AG04450 (cell line): ENCODE measurements at regions of chr12 and their contacts with region 1.

Region 1: DNA sequence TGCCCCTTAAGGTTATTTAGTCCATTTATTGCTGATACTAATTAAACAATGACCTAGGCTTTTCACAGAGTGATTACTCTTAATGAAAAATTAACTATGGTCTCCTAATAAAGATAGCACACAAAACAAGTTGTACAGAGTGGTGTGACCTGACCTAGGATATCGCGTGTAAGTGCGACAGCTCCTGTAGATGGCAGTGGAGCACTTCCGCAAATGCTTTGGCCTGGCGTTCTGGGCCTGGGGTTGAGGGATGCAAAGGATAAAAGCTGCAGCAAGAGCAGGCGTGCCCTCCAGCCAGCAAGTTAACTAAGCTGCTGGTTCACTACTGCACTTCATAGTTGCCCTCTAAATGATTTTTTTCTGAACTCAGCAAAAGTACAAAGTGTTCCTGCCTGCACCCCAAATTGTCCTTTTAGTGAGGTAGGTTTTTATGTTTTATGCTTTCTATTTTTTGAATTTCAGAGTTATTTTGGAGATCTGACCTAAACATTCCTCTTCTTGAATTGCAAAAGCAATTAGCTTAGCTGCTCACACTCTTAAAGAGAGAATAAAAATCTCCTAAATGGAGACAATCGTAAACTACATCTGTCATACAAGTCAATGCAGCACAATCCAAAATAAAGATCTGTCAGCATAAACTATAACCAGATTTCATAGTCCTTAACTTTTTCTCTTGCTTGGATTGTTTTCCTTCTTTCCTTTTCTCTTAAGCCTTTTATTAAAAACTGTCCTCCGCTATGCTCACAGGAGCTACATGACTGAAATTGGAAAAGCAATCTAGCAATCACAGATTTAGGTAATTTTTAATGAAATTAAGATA is 379.6 kb downstream of the LRIG3 start:
- DNase-seq: peak; percentile 85
- H3K4me3 ChIP-seq: no peak overlapping the region
- H3K27ac ChIP-seq: no peak overlapping the region
- H3K27me3 ChIP-seq: no peaks in the 10 kb centered on the region
- CTCF ChIP-seq: peak; percentile 94

Region 2: DNA sequence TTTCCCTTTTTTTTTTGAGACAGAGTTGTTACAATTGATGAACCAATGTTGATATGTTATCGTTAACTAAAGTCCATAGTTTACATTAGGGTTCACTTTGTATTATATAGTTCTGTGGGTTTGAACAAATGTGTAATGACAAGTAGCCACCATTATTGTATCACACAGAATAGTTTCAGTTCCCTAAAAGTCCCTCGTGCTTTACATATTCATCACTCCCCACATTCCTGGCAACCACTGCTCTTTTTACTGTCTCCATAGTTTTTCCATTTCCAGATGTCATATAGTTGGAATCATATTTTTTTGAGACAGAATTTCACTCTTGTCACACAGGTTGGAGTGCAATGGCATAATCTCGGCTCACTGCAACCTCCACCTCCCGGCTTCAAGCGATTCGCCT is 1765.1 kb before region 1 on chr12:
- CTCF ChIA-PET with region 1: no interaction called
- POLR2A ChIA-PET with region 1: no interaction called
- DNase-seq: no peak
- H3K4me3 ChIP-seq: no peak overlapping the region
- H3K27ac ChIP-seq: no peak overlapping the region
- H3K27me3 ChIP-seq: no peaks in the 10 kb centered on the region
- CTCF ChIP-seq: no peak

Region 3: DNA sequence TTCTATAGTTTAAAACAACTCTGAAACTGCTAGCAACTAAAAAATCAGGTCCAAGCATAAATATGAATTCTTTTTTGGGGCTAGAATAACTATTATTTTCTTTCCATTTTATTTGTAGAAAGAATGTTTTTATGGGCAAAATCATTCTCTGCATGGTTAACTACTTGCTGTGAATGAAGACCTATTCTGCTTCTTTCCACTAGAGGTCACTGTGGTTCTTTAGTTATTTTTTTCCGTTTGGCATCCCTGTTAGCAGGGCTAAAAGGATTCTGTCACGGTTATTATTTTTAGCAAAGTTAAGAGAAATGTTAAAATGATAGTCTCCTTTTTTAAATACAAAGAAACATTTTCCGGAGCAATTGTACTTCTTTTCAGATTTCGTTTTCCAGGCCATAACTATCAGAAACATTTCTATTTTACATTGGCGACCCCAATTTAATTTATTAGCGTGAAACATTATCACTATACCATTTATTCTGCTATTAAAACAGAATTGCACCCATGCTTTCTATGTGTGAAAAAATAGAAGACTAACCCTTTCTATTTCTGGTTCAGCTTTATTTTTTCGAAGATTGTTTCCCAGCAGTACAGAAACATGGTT is 194.6 kb before region 1 on chr12:
- CTCF ChIA-PET with region 1: interaction called, 21 read pairs
- POLR2A ChIA-PET with region 1: no interaction called
- DNase-seq: no peak
- H3K4me3 ChIP-seq: no peak overlapping the region
- H3K27ac ChIP-seq: no peak overlapping the region
- H3K27me3 ChIP-seq: no peaks in the 10 kb centered on the region
- CTCF ChIP-seq: peak; percentile 75

Region 4: DNA sequence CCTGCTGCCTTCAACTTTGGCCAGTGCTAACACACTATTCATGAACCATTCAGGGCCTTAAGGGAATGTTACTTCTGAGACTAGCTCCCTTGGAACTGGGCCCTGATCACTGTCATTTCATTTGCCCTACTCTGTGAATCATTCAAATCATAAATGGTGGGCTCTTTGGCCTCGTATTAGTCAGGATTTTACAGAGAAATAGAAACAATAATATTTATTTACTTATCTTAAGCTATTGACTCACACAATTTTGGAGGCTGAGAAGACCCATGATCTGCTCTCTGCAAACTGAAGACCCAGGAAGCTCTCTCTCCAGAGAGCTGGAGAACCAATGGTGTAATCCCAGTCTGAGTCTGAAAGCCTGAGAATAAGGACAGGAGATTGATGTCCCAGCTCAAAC is 18.9 kb before region 1 on chr12:
- CTCF ChIA-PET with region 1: no interaction called
- POLR2A ChIA-PET with region 1: no interaction called
- DNase-seq: no peak
- H3K4me3 ChIP-seq: no peak overlapping the region
- H3K27ac ChIP-seq: no peak overlapping the region
- H3K27me3 ChIP-seq: no peaks in the 10 kb centered on the region
- CTCF ChIP-seq: no peak

Region 5: DNA sequence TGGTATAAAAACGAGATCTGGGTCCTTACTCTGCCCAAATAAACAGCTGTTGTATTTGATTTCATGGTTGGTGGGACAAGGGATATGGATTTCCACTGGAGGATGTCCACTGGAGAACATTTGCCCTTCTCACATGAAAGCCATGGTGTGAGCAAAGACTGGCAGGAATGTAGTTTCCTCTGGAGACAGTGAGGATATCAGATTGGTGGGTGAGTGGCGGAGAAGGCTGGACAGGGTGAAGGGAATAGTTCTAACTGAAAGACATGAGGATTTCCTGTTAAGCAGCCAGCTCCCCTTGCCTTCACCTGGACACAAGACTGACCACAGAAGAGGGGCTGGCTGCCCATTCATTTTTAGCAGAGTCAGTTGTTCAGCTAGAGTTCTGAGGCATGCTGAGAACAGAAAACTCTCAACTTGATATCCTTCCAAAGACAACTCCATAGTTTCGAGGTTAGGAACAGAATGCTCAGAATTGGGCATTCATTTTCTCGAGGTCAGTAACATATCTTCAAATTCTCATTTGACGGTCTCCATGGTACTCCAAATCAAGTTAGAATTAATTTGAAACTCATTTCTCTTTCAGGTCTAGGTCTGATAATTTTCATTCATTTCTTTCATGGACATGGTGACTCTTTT is 13.9 kb after region 1 on chr12:
- CTCF ChIA-PET with region 1: interaction called, 28 read pairs
- POLR2A ChIA-PET with region 1: no interaction called
- DNase-seq: no peak
- H3K4me3 ChIP-seq: no peak overlapping the region
- H3K27ac ChIP-seq: no peak overlapping the region
- H3K27me3 ChIP-seq: no peaks in the 10 kb centered on the region
- CTCF ChIP-seq: no peak

Region 6: DNA sequence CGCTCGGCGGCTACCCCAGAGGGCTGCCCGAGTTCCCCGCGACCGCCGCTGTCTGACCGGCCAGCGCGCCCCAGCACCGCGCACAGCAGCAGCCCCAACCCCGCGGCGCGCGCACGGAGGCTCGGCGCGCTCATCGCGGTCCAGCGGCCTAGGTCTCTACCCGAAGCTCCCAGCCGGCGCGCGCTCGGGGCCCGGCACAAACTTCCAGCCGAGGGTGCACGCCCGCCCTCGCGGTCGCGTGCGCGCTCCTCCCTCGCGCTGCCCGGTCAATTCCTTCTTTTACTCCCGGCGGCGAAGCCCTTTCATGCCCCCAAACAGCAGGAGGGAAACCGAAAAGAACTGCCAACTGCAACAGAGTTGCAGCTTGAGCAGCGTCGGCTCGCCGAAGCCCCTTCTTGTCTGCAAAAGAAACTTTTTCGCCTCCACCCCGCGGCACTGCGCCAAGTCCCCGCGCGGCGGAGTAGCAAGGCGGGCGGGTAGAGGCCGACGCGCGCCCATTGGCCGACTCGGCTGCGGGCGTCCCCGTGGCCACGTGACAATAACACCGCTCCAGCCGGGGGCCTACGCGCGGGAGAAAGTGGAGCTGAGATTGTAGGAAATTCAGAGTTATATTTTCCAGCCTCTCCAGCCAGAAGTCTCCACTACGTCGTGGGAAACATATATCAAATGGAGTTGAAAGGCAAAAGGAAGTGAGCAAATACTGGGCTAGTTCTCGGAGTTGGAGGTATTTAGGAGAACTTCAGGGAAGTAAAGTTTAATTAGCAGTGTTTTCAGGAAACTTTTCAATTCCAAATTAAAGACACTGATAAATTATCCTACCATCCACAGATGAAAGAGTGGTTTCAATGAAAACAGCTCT is 379.6 kb after region 1 on chr12 and contains the start of gene LRIG3:
- CTCF ChIA-PET with region 1: interaction called, 35 read pairs
- POLR2A ChIA-PET with region 1: interaction called, 3 read pairs
- DNase-seq: peak; percentile 76
- H3K4me3 ChIP-seq: peak within 1 kb of the TSS; percentile 75
- H3K27ac ChIP-seq: peak within 1 kb of the TSS; percentile 85
- H3K27me3 ChIP-seq: no peaks in the 10 kb centered on the region
- CTCF ChIP-seq: no peak
- polyA plus RNA-seq, gene LRIG3: 58.2 and 80.1 TPM in 2 replicates

Region 7: GRCh38 chr12:59113831-59114615 is 573.3 kb after region 1 on chr12:
- CTCF ChIA-PET with region 1: interaction called, 17 read pairs
- POLR2A ChIA-PET with region 1: no interaction called
- DNase-seq: peak; percentile 69
- H3K4me3 ChIP-seq: no peak overlapping the region
- H3K27ac ChIP-seq: no peak overlapping the region
- H3K27me3 ChIP-seq: no peaks in the 10 kb centered on the region
- CTCF ChIP-seq: peak; percentile 98

Region 8: DNA sequence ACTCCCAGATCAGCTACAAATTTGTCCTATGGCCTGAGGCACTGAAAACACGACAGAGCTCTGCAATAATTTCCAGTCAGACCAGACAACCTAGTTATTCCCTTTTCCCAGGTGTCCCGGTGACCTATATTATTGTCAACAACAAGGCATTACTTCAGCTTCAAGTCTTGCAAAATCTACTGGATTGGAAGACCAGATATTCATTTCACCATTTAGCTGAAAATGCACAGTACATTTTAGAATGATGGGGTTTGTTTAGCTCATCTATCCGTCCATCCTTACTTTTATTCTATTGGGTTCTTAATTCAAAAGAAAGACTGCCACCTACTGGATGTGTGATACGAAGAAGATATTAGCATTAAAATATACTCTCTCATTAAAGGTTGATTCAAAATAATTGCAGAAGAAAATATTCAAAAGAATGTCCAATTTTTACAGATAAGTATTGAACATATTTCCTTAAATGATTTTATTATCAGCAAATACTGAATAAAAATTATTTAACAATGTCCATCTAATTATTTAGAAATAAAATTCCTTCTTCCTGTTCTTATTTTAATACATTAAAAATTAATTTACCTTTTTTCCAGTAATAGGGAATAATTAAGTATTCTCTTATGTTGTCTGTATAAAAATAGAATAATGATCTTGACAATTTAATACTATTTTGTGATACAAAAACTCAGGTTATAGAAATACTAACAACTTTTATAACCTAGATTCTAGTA is 624.5 kb after region 1 on chr12:
- CTCF ChIA-PET with region 1: interaction called, 34 read pairs
- POLR2A ChIA-PET with region 1: no interaction called
- DNase-seq: peak; percentile 7
- H3K4me3 ChIP-seq: no peak overlapping the region
- H3K27ac ChIP-seq: no peak overlapping the region
- H3K27me3 ChIP-seq: no peaks in the 10 kb centered on the region
- CTCF ChIP-seq: peak; percentile 61